ENCODE measurements at regions of chr16 and their contacts with region 1.

Region 1: GRCh38 chr16:1002399-1003161 is 21.0 kb downstream of the SOX8 start:
- DNase-seq: no peak

Region 2: DNA sequence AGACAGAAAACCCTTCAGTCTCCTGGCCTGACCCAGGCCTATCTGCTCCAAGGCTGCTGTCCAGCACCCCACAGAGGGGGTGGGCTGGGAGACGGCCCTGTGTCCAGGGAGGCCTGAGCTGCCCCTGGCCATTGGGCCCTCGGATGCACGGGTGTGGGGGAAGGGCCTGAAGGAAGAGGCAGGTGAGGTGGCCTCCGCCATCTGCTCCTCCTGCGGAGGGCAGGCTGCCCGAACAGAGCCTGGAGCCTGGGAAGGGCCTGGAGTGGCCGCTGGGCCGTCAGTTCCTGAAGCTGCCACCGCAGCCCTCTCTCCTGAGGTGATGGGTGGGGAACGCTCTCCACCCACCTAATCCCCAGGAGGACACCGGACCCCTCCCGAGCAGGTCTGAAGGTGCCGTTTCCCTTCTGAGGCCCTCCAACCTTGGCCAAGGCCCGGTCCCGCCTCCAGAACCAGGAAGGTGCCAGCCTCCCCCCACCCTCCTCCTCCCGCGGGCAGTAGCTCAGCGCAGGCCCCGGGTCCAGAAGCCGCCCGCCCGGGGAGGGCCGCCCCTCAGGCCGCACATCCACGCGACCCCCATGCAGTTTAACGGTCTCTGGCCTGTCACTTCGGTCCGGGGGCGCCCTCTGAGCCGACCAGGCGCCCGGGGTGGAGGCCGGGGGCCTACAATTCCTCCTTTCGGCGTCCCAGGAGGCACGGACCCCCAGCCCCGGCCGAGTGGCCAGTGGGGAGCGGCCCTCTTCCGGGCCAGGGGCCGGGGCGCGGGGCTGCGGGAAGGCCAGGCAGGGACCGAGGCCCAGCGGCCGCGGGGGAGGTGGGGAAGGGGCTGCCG is 297.8 kb before region 1 on chr16:
- intact Hi-C with region 1: loop called in 1 of 2 experiments (anchors 1 kb)
- DNase-seq: no peak

Region 3: GRCh38 chr16:1036726-1037393 is 34.3 kb after region 1 on chr16:
- intact Hi-C with region 1: no loop called
- DNase-seq: no peak

Region 4: DNA sequence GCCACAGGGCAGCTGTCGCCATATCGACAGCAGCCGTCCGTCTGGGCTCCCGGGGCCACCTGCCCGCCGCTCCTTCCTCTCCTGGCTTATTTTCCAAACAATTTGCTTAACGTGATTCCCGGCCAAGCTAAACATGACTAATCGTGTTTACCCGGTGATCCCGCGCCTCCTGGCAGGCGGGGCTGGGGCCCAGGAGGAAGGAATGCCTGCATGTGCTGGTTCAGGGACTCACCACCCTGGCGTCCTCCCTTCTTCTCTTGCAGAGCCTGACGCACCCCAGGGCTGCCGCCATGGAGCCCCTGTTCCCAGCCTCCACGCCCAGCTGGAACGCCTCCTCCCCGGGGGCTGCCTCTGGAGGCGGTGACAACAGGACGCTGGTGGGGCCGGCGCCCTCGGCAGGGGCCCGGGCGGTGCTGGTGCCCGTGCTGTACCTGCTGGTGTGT is 76.0 kb after region 1 on chr16:
- intact Hi-C with region 1: no loop called
- DNase-seq: no peak